ENCODE measurements at regions of chr6 and their contacts with region 1.

Region 1: DNA sequence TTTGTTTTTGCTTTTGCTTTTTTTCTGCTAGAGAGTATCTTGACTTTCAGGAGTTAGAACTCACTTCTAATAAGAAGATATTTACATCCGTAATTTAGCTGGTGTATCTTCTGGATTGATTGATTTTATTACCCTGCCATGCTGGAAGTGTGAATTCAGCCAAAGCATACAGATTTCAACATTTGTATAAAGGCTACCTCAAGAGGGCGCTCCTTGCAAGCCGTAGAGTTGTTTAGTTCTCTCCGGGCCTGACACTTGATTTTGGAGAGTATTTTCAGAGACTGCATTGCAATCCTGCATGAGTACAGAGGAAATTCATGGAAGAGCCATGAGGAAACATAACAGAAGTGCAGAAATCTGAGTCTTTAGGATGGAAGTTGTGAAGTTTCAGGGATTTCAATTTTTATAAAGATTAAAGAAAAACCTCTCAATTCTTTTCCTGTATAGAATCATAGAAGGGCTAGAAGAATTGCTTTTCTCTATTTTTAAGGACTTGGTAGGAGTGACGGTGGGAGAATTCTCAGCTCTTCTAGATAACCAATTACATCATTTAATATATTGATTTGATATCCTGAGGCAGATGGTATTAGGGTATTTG is 66.7 kb upstream of the TIAM2 start:
- DNase-seq: peak; percentile 73
- CTCF ChIP-seq: peak; percentile 76

Region 2: DNA sequence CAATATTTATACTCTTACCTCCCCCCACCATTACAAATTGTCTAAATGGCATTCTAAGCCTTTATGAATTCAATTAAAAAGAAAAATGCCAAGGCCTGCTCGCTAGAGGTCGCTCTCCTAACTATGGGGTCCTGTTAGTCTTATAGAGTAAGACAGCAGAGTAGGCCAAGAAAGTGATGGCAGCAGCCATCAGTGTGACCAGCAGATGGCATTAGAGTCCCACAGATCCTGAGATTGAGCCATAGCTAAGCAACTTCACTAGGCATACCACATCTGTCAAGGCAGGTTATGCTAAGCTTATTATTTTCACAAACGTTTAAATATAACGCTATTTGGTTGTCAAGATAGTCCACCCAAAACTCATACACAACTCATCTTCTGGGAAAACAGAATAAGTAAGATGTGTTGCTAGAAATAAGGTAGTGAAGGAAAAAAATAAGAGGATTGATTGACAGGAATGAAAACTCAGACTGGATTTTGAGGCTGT is 252.8 kb before region 1 on chr6:
- CTCF ChIA-PET with region 1: interaction called, 16 read pairs
- POLR2A ChIA-PET with region 1: no interaction called
- DNase-seq: peak; percentile 87
- CTCF ChIP-seq: peak; percentile 99

Region 3: GRCh38 chr6:154754152-154754551 is 174.3 kb before region 1 on chr6:
- CTCF ChIA-PET with region 1: no interaction called
- POLR2A ChIA-PET with region 1: no interaction called
- DNase-seq: no peak
- CTCF ChIP-seq: no peak

Region 4: DNA sequence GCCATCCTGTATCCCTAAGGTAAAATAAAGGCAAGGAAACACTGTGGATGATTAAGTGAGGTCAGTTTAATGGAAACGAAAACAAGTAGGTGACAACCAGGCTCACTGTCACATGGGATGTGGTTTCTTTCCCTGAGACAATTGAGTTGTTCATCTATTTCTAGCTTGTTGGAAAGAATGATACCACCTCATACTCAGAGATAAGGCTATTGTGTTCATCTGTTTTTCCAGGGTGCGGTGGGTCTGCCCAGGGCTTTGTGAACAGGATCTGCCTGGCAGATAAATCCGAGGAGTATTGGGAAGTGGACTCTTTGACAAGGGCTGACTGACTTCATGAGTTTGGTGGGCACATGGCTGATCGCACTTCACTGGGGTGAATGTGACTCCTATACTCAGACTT is 14.1 kb before region 1 on chr6:
- CTCF ChIA-PET with region 1: interaction called, 25 read pairs
- POLR2A ChIA-PET with region 1: no interaction called
- DNase-seq: no peak
- CTCF ChIP-seq: no peak

Region 5: DNA sequence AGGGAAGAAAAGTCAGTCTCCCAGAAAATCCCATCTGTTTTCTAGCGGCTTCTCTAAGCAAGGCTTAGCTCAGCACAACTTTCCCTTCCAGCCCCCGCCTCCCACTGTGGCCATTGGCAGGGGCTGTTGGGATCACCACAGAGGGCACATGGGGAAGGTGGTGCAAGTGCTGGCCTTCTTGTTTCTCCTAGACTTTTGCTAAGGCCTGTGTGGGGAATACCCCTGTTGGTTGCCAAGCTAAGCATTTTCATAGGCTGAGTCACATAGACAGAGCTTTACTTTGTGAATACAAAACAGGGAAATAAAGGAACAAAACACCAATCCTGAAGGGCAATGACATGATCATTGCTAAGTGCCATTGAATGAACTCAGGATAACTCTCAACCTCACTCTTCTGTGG is 34.3 kb after region 1 on chr6:
- CTCF ChIA-PET with region 1: interaction called, 11 read pairs
- POLR2A ChIA-PET with region 1: no interaction called
- DNase-seq: no peak
- CTCF ChIP-seq: no peak

Region 6: DNA sequence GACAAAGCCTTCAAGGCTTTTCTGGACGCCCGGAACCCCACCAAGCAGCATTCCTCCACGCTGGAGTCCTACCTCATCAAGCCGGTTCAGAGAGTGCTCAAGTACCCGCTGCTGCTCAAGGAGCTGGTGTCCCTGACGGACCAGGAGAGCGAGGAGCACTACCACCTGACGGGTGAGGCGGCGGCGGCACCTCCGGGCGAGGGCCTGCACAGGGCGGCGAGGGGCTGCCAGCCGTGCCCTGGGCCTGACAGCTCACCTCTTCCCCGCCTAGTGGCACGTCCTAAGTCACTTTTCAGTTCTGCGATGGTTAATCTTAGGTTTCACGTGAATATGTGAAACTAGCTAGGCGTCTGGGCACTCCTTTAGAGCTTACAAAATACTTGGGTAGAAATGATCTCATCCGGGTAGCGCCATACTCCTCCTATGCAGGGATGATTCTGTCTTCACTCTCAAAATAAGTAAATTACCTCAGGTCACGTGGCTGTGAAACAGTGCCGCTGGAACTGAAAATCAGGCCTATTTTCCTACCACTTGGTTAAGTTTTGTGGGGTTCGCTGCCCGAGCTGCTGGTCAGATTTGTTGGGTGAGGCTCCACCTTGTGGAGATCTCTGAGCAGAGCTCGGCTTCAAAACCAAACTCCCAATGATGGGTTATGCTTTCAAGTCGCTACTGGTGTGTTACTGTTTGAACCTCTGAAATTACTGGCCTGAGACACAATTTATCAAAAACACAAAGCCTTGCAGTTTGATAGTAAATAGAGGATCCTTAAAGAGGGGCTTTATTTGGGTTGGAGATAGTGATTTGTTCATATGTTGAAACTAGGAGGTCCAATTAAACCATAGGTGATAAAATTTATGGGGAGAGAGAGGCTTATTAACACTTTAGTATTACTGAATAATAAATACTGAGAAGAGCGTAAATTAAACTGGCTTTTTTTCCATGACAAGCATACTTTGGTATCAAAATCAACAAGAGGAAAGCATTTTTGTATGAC is 319.9 kb after region 1 on chr6:
- CTCF ChIA-PET with region 1: interaction called, 24 read pairs
- POLR2A ChIA-PET with region 1: no interaction called
- DNase-seq: peak; percentile 64
- CTCF ChIP-seq: peak; percentile 44

Measured in GM10248 (cell line).